ENCODE measurements at regions of chr2 and their contacts with region 1.

Region 1: GRCh38 chr2:200306196-200306930 is at the start of gene SPATS2L:
- DNase-seq: peak; percentile 63
- H3K4me3 Mint-ChIP-seq: peak within 1 kb of the TSS; percentile 99
- H3K27ac Mint-ChIP-seq: peak within 1 kb of the TSS; percentile 94
- H3K4me1 Mint-ChIP-seq: peaks cover 45% of the 10 kb centered on the region
- H3K27me3 Mint-ChIP-seq: no peaks in the 10 kb centered on the region
- CTCF ChIP-seq: no peak
- total RNA-seq, gene SPATS2L: 67.5 and 68.3 TPM in 2 replicates

Region 2: GRCh38 chr2:199979832-199980628 is 326.3 kb before region 1 on chr2:
- CTCF ChIA-PET with region 1: interaction called, 15 read pairs
- POLR2A ChIA-PET with region 1: interaction called, 14 read pairs
- intact Hi-C with region 1: loop called (anchors 1 kb)
- DNase-seq: peak; percentile 82
- H3K4me3 Mint-ChIP-seq: no peak overlapping the region
- H3K27ac Mint-ChIP-seq: peak overlapping the region; percentile 59
- H3K4me1 Mint-ChIP-seq: peaks cover 29% of the 10 kb centered on the region
- H3K27me3 Mint-ChIP-seq: no peaks in the 10 kb centered on the region
- CTCF ChIP-seq: peak; percentile 78

Region 3: GRCh38 chr2:200156166-200156835 is 150.1 kb before region 1 on chr2:
- CTCF ChIA-PET with region 1: no interaction called
- POLR2A ChIA-PET with region 1: interaction called, 14 read pairs
- intact Hi-C with region 1: loop called (anchors 5 kb)
- DNase-seq: peak; percentile 92
- H3K4me3 Mint-ChIP-seq: peak overlapping the region; percentile 70
- H3K27ac Mint-ChIP-seq: peak overlapping the region; percentile 77
- H3K4me1 Mint-ChIP-seq: peaks cover 6% of the 10 kb centered on the region
- H3K27me3 Mint-ChIP-seq: no peaks in the 10 kb centered on the region
- CTCF ChIP-seq: no peak

Region 4: GRCh38 chr2:200319548-200320337 is 13.4 kb after region 1 on chr2:
- CTCF ChIA-PET with region 1: interaction called, 16 read pairs
- POLR2A ChIA-PET with region 1: interaction called, 25 read pairs
- intact Hi-C with region 1: no loop called
- DNase-seq: peak; percentile 42
- H3K4me3 Mint-ChIP-seq: no peak overlapping the region
- H3K27ac Mint-ChIP-seq: peak overlapping the region; percentile 61
- H3K4me1 Mint-ChIP-seq: peaks cover 27% of the 10 kb centered on the region
- H3K27me3 Mint-ChIP-seq: no peaks in the 10 kb centered on the region
- CTCF ChIP-seq: no peak

Region 5: DNA sequence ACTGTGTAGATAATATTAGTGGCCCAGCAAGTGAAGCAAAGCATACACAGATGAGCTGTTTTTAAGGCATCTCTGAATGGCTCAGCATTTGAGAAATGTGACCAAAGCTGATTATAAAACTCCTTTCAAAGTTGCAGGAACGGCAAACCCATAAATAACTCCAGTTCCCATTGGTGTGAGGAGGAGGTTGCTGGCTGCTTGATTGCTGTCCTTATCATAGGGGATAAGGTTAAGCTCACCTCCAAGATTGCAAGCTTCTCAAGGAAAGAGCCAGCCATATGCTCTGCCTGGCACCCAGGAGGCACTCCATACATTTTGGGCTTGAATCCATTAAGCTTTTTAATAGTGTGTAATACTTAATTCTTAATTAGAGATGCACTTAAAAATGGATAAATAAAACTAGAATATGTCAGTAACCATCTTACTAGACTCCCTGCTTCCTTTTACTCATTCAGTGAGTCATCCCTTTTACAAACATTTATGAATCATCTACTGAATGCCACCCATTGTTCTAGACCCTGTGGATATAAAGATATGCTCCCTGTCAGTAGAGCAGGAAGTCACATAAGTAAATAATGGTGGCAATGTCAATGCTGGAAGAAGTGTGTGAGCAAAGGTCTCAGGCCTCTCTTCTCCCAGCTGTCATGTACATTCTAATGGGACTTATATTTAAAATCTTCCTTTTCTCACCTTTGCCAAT is 99.4 kb after region 1 on chr2:
- CTCF ChIA-PET with region 1: no interaction called
- POLR2A ChIA-PET with region 1: interaction called, 5 read pairs
- intact Hi-C with region 1: loop called (anchors 5 kb)
- DNase-seq: peak; percentile 80
- H3K4me3 Mint-ChIP-seq: peak overlapping the region; percentile 28
- H3K27ac Mint-ChIP-seq: peak overlapping the region; percentile 80
- H3K4me1 Mint-ChIP-seq: peaks cover 38% of the 10 kb centered on the region
- H3K27me3 Mint-ChIP-seq: no peaks in the 10 kb centered on the region
- CTCF ChIP-seq: no peak

Region 6: DNA sequence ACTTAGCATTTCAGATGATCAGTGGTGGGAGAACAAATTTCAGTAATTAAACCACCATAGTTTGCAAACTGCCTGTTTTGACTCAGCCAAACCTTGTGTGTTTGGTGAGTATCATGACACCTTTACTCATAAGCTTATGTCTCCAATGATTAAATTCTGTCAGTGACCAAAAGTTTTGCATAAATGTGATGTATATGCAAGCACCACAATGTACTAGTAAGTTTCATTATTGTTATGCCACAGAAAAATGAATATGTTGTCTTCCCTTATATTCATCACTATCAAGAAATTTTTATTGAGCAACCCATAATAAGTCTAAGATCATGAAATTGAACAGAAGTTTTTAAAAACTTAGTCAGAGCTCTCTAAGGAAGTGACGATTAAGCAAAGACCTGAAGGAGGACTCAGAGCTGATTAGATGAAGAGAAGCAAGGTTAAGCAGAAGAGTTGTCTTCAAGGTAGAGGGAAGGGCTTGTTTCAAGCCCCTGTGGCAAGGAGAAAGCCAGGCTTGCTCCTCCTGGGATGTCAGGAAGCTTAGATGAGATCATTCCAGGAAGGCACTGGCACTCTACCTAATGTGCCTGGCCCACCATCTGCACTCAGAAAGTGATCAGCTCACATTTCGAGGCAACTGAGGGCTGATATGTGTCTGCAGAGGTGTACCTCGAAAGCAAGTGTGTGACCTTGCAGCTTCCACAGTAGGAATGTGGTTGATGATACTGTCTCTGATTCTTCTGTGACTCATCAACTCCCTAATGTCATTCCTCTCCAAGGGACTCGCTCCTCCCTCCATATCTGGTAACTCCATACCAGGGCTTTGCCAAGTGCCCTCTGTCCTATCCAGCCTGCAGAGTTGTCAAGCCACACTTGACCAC is 148.8 kb after region 1 on chr2:
- CTCF ChIA-PET with region 1: no interaction called
- POLR2A ChIA-PET with region 1: no interaction called
- intact Hi-C with region 1: no loop called
- DNase-seq: peak; percentile 48
- H3K4me3 Mint-ChIP-seq: no peak overlapping the region
- H3K27ac Mint-ChIP-seq: no peak overlapping the region
- H3K4me1 Mint-ChIP-seq: peaks cover 10% of the 10 kb centered on the region
- H3K27me3 Mint-ChIP-seq: no peaks in the 10 kb centered on the region
- CTCF ChIP-seq: no peak